ENCODE measurements at regions of chr17 and their contacts with region 1.

Region 1: DNA sequence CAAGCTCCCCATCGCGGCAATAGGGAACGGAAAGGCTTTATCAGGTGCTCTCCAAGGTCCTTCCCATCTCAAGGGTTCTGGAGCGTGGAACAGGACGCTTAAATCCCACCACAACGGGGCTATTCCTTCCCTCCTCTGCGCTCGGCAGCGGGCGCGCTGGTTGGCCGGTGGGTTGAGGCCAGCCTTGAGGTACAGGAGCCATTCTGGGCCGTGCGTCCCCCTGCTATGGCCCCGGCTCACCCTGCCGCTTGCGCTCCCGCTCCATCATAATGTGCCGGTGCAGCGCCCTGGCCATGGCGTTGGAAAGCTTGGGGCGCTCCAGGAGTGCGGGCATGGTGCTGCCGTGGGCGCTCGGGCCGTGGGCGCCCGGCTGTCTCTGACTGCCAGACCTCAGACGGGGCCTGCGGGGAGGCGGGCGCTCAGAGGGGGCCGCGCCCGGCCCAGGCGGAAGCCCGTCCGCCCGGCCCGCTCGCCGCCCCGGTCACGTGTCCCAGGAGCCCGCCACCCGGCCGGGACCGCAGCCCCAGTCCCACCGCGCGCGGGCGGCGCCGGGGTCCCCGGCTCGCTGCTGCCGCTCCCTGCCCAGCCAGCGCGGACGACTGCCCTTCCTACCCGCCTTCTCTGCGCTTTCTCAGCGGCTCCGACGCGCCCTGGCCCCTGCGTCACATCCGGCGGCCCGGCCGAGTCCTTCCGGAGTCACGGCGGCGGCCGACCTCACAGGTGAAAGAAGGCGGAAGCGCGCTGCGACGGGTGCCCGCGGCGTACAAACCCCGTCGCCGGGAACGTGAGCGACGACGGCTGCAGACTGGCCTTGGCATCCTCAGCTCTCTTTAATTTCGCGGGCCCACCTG is at the start of gene GPS2:
- DNase-seq: peak; percentile 96
- ATAC-seq: peak; percentile 86
- H3K4me3 Mint-ChIP-seq: peak within 1 kb of the TSS; percentile 91
- H3K27ac Mint-ChIP-seq: peak within 1 kb of the TSS; percentile 97
- H3K4me1 Mint-ChIP-seq: peaks cover 61% of the 10 kb centered on the region
- H3K27me3 Mint-ChIP-seq: no peaks in the 10 kb centered on the region
- total RNA-seq, gene GPS2: 86.3 to 88.0 TPM

Region 2: DNA sequence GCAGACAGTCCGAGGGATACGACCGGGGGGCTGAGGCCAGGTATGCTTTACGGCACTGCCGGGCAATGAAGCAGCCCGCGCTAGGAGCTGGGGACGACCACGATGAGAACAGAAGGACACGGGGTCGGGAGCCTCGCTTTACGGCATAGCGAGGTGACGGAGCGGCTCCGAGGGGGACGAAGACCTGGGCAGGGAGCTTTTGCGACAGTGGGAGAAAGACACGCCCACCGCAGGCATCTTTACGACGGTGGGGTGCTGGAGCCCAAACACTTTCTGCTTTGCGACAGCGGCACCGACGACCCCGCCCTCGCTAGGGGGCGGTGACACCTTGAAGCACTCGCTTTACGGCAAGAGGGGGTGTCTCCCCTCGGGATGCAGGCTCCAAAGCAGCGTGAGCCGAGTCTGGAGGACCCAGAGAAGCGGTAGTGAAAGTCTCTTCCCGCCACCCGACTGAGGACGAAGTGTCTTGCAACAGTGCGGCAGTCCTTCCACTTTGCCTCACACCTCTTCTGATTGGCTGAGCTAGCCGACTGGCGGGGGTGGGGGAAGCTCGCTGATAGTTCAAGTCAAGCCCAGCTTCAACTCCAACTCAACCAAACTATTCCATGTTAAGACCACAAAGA is 14.5 kb after region 1 on chr17:
- CTCF ChIA-PET with region 1: interaction called, 7 read pairs
- POLR2A ChIA-PET with region 1: interaction called, 24 read pairs
- DNase-seq: peak; percentile 98
- ATAC-seq: peak; percentile 63
- H3K4me3 Mint-ChIP-seq: peak overlapping the region; percentile 87
- H3K27ac Mint-ChIP-seq: peak overlapping the region; percentile 98
- H3K4me1 Mint-ChIP-seq: peaks cover 54% of the 10 kb centered on the region
- H3K27me3 Mint-ChIP-seq: no peaks in the 10 kb centered on the region

Measured in activated CD8-positive, alpha-beta T cell treated with anti-CD3 and anti-CD28 coated beads, Interleukin-2, amount 10 ng/mL, durations not matched to agents 7 days and 5 days (primary cell).